MCF 10A (cell line): ENCODE measurements at regions of chr7 and their contacts with region 1.

Region 1: GRCh38 chr7:96414931-96415292 is 93.0 kb upstream of the SLC25A13 start:
- DNase-seq: peak; percentile 73
- H3K4me3 Mint-ChIP-seq: no peak overlapping the region
- H3K27ac Mint-ChIP-seq: no peak overlapping the region
- H3K4me1 Mint-ChIP-seq: no peaks in the 10 kb centered on the region
- H3K27me3 Mint-ChIP-seq: peaks cover 29% of the 10 kb centered on the region
- CTCF ChIP-seq: peak; percentile 82

Region 2: DNA sequence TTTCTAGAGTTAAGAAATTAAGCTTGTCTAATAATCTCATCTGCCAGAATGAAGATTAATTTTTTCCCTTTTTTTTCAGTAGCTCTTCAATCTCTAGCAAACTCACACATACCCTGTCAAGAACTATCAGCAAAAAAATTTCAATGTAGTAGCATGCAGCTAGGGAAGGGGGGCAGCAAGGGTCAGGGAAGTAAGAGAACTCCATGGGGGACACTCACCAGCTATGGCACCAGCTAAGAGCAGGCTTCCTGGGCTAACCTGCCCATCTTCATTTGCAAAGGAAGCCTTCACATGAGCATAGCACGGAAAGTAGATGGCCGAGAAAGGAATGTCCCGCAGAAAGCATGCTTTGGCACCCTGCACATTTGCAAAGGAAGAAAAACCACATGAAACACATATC is 283.4 kb before region 1 on chr7:
- CTCF ChIA-PET with region 1: no interaction called
- POLR2A ChIA-PET with region 1: no interaction called
- intact Hi-C with region 1: no loop called
- DNase-seq: no peak
- H3K4me3 Mint-ChIP-seq: no peak overlapping the region
- H3K27ac Mint-ChIP-seq: no peak overlapping the region
- H3K4me1 Mint-ChIP-seq: peaks cover 12% of the 10 kb centered on the region
- H3K27me3 Mint-ChIP-seq: no peaks in the 10 kb centered on the region
- CTCF ChIP-seq: no peak

Region 3: GRCh38 chr7:96179837-96180236 is 235.1 kb before region 1 on chr7:
- CTCF ChIA-PET with region 1: interaction called, 3 read pairs
- POLR2A ChIA-PET with region 1: no interaction called
- intact Hi-C with region 1: loop called (anchors 5 kb)
- DNase-seq: no peak
- H3K4me3 Mint-ChIP-seq: no peak overlapping the region
- H3K27ac Mint-ChIP-seq: no peak overlapping the region
- H3K4me1 Mint-ChIP-seq: peaks cover 14% of the 10 kb centered on the region
- H3K27me3 Mint-ChIP-seq: no peaks in the 10 kb centered on the region
- CTCF ChIP-seq: peak; percentile 15

Region 4: GRCh38 chr7:96359876-96360275 is 55.0 kb before region 1 on chr7:
- CTCF ChIA-PET with region 1: no interaction called
- POLR2A ChIA-PET with region 1: no interaction called
- intact Hi-C with region 1: no loop called
- DNase-seq: no peak
- H3K4me3 Mint-ChIP-seq: no peak overlapping the region
- H3K27ac Mint-ChIP-seq: no peak overlapping the region
- H3K4me1 Mint-ChIP-seq: no peaks in the 10 kb centered on the region
- H3K27me3 Mint-ChIP-seq: no peaks in the 10 kb centered on the region
- CTCF ChIP-seq: no peak

Region 5: GRCh38 chr7:96538632-96539031 is 123.7 kb after region 1 on chr7:
- CTCF ChIA-PET with region 1: no interaction called
- POLR2A ChIA-PET with region 1: no interaction called
- intact Hi-C with region 1: no loop called
- DNase-seq: no peak
- H3K4me3 Mint-ChIP-seq: no peak overlapping the region
- H3K27ac Mint-ChIP-seq: no peak overlapping the region
- H3K4me1 Mint-ChIP-seq: no peaks in the 10 kb centered on the region
- H3K27me3 Mint-ChIP-seq: peaks cover 53% of the 10 kb centered on the region
- CTCF ChIP-seq: no peak

Region 6: GRCh38 chr7:96709381-96710228 is 294.7 kb after region 1 on chr7 and contains the start of gene SEM1:
- CTCF ChIA-PET with region 1: no interaction called
- POLR2A ChIA-PET with region 1: no interaction called
- intact Hi-C with region 1: loop called (anchors 5 kb)
- DNase-seq: peak; percentile 86
- H3K4me3 Mint-ChIP-seq: peak within 1 kb of the TSS; percentile 92
- H3K27ac Mint-ChIP-seq: peak within 1 kb of the TSS; percentile 99
- H3K4me1 Mint-ChIP-seq: peaks cover 10% of the 10 kb centered on the region
- H3K27me3 Mint-ChIP-seq: no peaks in the 10 kb centered on the region
- CTCF ChIP-seq: no peak
- total RNA-seq, gene SEM1: 70.3 and 80.2 TPM in 2 replicates

Region 7: GRCh38 chr7:96800824-96801223 is 385.9 kb after region 1 on chr7:
- CTCF ChIA-PET with region 1: interaction called, 3 read pairs
- POLR2A ChIA-PET with region 1: no interaction called
- intact Hi-C with region 1: loop called (anchors 2 kb)
- DNase-seq: peak; percentile 65
- H3K4me3 Mint-ChIP-seq: no peak overlapping the region
- H3K27ac Mint-ChIP-seq: no peak overlapping the region
- H3K4me1 Mint-ChIP-seq: peaks cover 15% of the 10 kb centered on the region
- H3K27me3 Mint-ChIP-seq: peaks cover 64% of the 10 kb centered on the region
- CTCF ChIP-seq: no peak

Region 8: GRCh38 chr7:96933017-96933645 is 518.2 kb after region 1 on chr7:
- CTCF ChIA-PET with region 1: interaction called, 10 read pairs
- POLR2A ChIA-PET with region 1: no interaction called
- intact Hi-C with region 1: no loop called
- DNase-seq: no peak
- H3K4me3 Mint-ChIP-seq: no peak overlapping the region
- H3K27ac Mint-ChIP-seq: no peak overlapping the region
- H3K4me1 Mint-ChIP-seq: no peaks in the 10 kb centered on the region
- H3K27me3 Mint-ChIP-seq: peaks cover 49% of the 10 kb centered on the region
- CTCF ChIP-seq: no peak